PC-9 (cell line): ENCODE measurements at regions of chrX and their contacts with region 1.

Region 1: GRCh38 chrX:103614992-103615391 is 7.2 kb downstream of the TCEAL3 start:
- DNase-seq: peak; percentile 52 to 81
- H3K4me3 ChIP-seq: no peak overlapping the region
- H3K27ac ChIP-seq: peak overlapping the region; percentile 86
- H3K4me1 ChIP-seq: peaks cover 43% of the 10 kb centered on the region
- H3K27me3 ChIP-seq: no peaks in the 10 kb centered on the region
- CTCF ChIP-seq: no peak

Region 2: GRCh38 chrX:103656632-103657031 is 41.6 kb after region 1 on chrX:
- CTCF ChIA-PET with region 1: no interaction called
- POLR2A ChIA-PET with region 1: no interaction called
- intact Hi-C with region 1: loop called (anchors 5 kb)
- DNase-seq: peak; percentile 62 to 93
- H3K4me3 ChIP-seq: no peak overlapping the region
- H3K27ac ChIP-seq: peak overlapping the region; percentile 94
- H3K4me1 ChIP-seq: peaks cover 53% of the 10 kb centered on the region
- H3K27me3 ChIP-seq: no peaks in the 10 kb centered on the region
- CTCF ChIP-seq: no peak